GM10248 (cell line): ENCODE measurements at regions of chr14 and their contacts with region 1.

Region 1: DNA sequence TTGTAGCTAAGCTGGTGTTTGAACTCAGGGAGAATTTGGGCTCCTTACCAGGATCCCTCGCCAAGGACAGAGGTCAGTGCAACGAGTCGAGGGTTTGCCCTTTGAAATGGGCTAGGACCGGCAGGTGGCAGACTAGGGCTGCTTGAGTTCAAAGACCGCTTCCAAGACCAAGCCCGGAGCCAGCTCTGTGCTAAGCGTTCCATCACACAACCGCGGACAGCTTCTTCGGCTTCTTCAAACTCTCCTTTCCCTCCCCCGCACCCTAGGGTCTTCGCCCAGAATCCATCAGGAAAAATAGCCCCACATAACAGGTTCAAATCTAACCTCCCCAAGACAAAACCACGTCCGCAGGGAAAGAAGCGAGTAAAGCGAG is 705 bp upstream of the FLVCR2 start:
- DNase-seq: peak; percentile 88
- CTCF ChIP-seq: peak; percentile 83

Region 2: GRCh38 chr14:75514673-75515628 is 62.8 kb before region 1 on chr14:
- CTCF ChIA-PET with region 1: interaction called, 11 read pairs
- POLR2A ChIA-PET with region 1: no interaction called
- DNase-seq: peak; percentile 60
- CTCF ChIP-seq: no peak

Region 3: DNA sequence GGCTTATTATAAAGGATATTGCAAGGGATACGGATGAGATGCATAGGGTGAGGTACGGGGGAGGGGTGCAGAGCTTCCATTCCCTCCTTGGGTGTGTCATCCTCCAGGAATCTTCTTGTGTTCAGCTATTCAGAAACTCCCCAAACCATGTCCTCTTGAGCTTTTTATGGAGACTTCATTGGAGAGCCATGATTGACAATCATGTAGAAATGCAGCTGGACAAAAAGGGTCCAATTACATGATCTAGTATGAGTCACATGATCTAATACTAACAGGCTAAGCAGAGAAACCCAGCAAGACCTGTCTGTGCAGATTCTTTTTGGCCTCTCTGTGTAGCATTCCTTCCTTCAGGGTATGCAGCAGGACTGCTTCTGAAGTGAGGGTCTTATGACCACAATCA is 23.2 kb before region 1 on chr14:
- CTCF ChIA-PET with region 1: interaction called, 127 read pairs
- POLR2A ChIA-PET with region 1: no interaction called
- DNase-seq: no peak
- CTCF ChIP-seq: no peak

Region 4: GRCh38 chr14:75566321-75566720 is 11.4 kb before region 1 on chr14:
- CTCF ChIA-PET with region 1: interaction called, 127 read pairs
- POLR2A ChIA-PET with region 1: no interaction called
- DNase-seq: no peak
- CTCF ChIP-seq: no peak

Region 5: GRCh38 chr14:75604856-75605851 is 27.4 kb after region 1 on chr14:
- CTCF ChIA-PET with region 1: interaction called, 19 read pairs
- POLR2A ChIA-PET with region 1: no interaction called
- DNase-seq: no peak
- CTCF ChIP-seq: no peak

Region 6: GRCh38 chr14:75647650-75648049 is 69.9 kb after region 1 on chr14:
- CTCF ChIA-PET with region 1: interaction called, 312 read pairs
- POLR2A ChIA-PET with region 1: no interaction called
- DNase-seq: no peak
- CTCF ChIP-seq: no peak

Region 7: DNA sequence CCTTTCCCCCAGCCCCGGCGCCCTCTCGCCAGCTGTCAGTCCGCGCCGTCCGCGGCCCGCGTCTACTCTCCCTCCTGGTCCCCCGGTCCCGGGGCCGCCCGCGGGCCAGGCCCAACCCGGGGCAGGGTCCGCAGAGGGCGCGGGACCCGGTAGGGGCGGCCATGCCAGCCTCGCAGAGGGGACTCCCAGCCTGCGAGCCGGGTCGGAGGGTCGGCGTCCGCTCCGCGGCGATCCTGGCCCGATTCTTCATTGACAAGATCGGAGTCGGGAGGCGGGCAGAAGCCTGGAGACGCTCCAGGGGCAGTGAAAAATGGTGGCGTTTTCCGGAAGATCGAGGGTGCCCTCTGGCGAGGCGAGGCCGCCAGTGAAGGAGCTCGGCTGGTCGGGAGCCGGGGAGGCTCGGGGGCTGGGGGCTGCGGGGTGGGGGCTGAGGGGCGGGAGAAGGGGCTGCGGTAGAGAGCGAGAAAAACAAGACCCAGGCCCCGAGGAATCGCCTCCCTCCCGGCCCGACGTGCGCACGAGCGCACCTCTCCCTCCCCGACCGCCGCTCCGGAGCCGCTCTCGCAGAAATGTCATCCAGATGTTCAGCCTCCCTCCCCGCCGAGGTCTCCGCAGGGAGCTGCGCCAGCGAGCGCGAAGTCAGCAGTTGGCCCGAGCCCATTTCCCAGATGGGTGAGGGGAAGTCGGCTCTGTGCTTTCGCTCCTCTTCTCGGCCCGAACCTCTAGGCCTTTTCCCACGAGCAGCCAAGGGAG is 404.7 kb after region 1 on chr14:
- CTCF ChIA-PET with region 1: interaction called, 37 read pairs
- POLR2A ChIA-PET with region 1: interaction called, 3 read pairs
- DNase-seq: peak; percentile 82
- CTCF ChIP-seq: peak; percentile 84